SK-N-SH (cell line): ENCODE measurements at regions of chr15 and their contacts with region 1.

Region 1: GRCh38 chr15:40893733-40894688 is at the start of gene VPS18:
- DNase-seq: peak; percentile 95
- H3K4me3 ChIP-seq: peak within 1 kb of the TSS; percentile 88 to 91
- H3K27ac ChIP-seq: peak within 1 kb of the TSS; percentile 51 to 85
- H3K4me1 ChIP-seq: peaks cover 0 to 14% of the 10 kb centered on the region in 2 experiments; a peak in 1 of 4 replicates
- H3K27me3 ChIP-seq: no peaks in the 10 kb centered on the region
- CTCF ChIP-seq: peak; percentile 73
- EP300 ChIP-seq: 0 out of 4 replicates have a peak, but pooled peaks of 1 of the 2 experiments have one; percentile 11
- RAD21 ChIP-seq: peak; percentile 85
- polyA plus RNA-seq, gene VPS18: 13.5 and 14.1 TPM in 2 replicates

Region 2: GRCh38 chr15:40782580-40783227 is 111.3 kb before region 1 on chr15:
- CTCF ChIA-PET with region 1: interaction called, 13 read pairs
- POLR2A ChIA-PET with region 1: no interaction called
- DNase-seq: peak; percentile 81
- H3K4me3 ChIP-seq: 0 out of 4 replicates have a peak overlapping the region, but pooled peaks of 1 of the 2 experiments have one; percentile 16
- H3K27ac ChIP-seq: no peak overlapping the region
- H3K4me1 ChIP-seq: peaks cover 2 to 10% of the 10 kb centered on the region in 2 experiments; a peak in 3 of 4 replicates
- H3K27me3 ChIP-seq: no peaks in the 10 kb centered on the region
- CTCF ChIP-seq: peak; percentile 58
- EP300 ChIP-seq: no peak
- RAD21 ChIP-seq: peak; percentile 93

Region 3: GRCh38 chr15:40814901-40815670 is 78.9 kb before region 1 on chr15:
- CTCF ChIA-PET with region 1: interaction called, 10 read pairs
- POLR2A ChIA-PET with region 1: no interaction called
- DNase-seq: no peak
- H3K4me3 ChIP-seq: no peak overlapping the region
- H3K27ac ChIP-seq: 0 out of 4 replicates have a peak overlapping the region, but pooled peaks of 1 of the 2 experiments have one; percentile 13
- H3K4me1 ChIP-seq: peaks cover 0 to 5% of the 10 kb centered on the region in 2 experiments; a peak in 1 of 4 replicates
- H3K27me3 ChIP-seq: no peaks in the 10 kb centered on the region
- CTCF ChIP-seq: no peak
- EP300 ChIP-seq: no peak
- RAD21 ChIP-seq: no peak

Region 4: GRCh38 chr15:40857601-40858341 is 36.2 kb before region 1 on chr15:
- CTCF ChIA-PET with region 1: no interaction called
- POLR2A ChIA-PET with region 1: interaction called, 12 read pairs
- DNase-seq: peak; percentile 91
- H3K4me3 ChIP-seq: no peak overlapping the region; a peak in 1 of 4 replicates
- H3K27ac ChIP-seq: no peak overlapping the region
- H3K4me1 ChIP-seq: peaks cover 0 to 3% of the 10 kb centered on the region in 2 experiments; a peak in 1 of 4 replicates
- H3K27me3 ChIP-seq: no peaks in the 10 kb centered on the region
- CTCF ChIP-seq: peak; percentile 92
- EP300 ChIP-seq: no peak
- RAD21 ChIP-seq: peak; percentile 82

Region 5: GRCh38 chr15:40881351-40881750 is 12.7 kb before region 1 on chr15:
- CTCF ChIA-PET with region 1: interaction called, 69 read pairs
- POLR2A ChIA-PET with region 1: no interaction called
- DNase-seq: no peak
- H3K4me3 ChIP-seq: no peak overlapping the region
- H3K27ac ChIP-seq: no peak overlapping the region
- H3K4me1 ChIP-seq: no peaks in the 10 kb centered on the region
- H3K27me3 ChIP-seq: no peaks in the 10 kb centered on the region
- CTCF ChIP-seq: no peak
- EP300 ChIP-seq: no peak
- RAD21 ChIP-seq: no peak